Spleen (tissue), 13 donors: ENCODE measurements at regions of chr5 and their contacts with region 1.

Region 1: GRCh38 chr5:14223372-14223771 is 80.2 kb downstream of the TRIO start:
- DNase-seq: no peak
- H3K4me3 ChIP-seq: peak overlapping the region in 1 of 8 donors; percentile 20
- H3K27ac ChIP-seq: peak overlapping the region in 7 of 8 donors; percentile 2 to 82 (median 70)
- H3K4me1 ChIP-seq: peaks cover 4 to 95% (median 67%) of the 10 kb centered on the region in 6 donors
- H3K27me3 ChIP-seq: no peaks in the 10 kb centered on the region
- CTCF ChIP-seq: no peak
- POLR2A ChIP-seq: no peak

Region 2: GRCh38 chr5:14142827-14143548 is 80.4 kb before region 1 on chr5 and contains the start of gene TRIO:
- intact Hi-C with region 1: loop called (anchors 10 kb)
- DNase-seq: peak; percentile 95
- H3K4me3 ChIP-seq: peak within 1 kb of the TSS; percentile 62 to 97 (median 78)
- H3K27ac ChIP-seq: peak within 1 kb of the TSS; percentile 83 to 97 (median 92)
- H3K4me1 ChIP-seq: peaks cover 5 to 52% (median 34%) of the 10 kb centered on the region in 6 donors
- H3K27me3 ChIP-seq: peaks cover 0 to 15% (median 0%) of the 10 kb centered on the region in 7 donors
- CTCF ChIP-seq: peak in 9 of 11 experiments; percentile 22 to 70 (median 57)
- POLR2A ChIP-seq: no peak
- total RNA-seq, gene TRIO: 139 to 280 (median 214) TPM